ENCODE measurements at regions of chr15 and their contacts with region 1.

Region 1: DNA sequence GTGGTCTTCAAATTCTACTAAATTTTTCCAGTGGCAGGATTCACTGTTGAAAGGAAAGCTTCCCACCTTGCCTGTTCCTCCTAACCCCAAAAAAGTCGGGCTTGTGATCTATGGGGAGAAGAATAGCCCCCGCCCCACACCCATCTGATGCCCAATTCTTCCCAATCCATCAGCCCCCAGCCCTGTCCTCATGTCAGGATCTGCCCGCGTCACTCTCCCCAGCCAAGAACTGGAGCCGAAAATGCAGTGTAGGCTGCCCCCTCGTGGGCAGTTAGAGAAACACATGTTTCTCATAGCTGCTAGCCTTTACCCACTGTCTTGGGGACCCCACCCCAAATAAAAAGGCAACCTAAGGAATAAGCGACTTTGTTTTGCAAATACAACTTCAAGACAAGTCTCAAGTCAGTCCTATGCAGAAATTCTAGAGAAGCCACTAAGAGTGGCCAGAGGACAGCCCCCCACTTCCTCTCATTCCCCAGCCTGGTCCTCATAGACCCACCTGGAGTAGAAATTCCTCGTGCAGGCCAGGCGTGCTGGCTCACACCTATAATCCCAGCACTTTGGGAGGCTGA is 13.0 kb upstream of the CSK start:
- DNase-seq: peak; percentile 75
- ATAC-seq: peak; percentile 60
- H3K4me3 ChIP-seq: no peak overlapping the region
- H3K4me3 Mint-ChIP-seq: no peak overlapping the region
- H3K27ac ChIP-seq: no peak overlapping the region
- H3K27ac Mint-ChIP-seq: peak overlapping the region; percentile 18
- H3K4me1 ChIP-seq: peaks cover 34 to 41% of the 10 kb centered on the region in 2 donors
- H3K4me1 Mint-ChIP-seq: peaks cover 36% of the 10 kb centered on the region
- H3K27me3 ChIP-seq: no peaks in the 10 kb centered on the region
- H3K27me3 Mint-ChIP-seq: no peaks in the 10 kb centered on the region
- CTCF ChIP-seq: peak; percentile 84

Region 2: DNA sequence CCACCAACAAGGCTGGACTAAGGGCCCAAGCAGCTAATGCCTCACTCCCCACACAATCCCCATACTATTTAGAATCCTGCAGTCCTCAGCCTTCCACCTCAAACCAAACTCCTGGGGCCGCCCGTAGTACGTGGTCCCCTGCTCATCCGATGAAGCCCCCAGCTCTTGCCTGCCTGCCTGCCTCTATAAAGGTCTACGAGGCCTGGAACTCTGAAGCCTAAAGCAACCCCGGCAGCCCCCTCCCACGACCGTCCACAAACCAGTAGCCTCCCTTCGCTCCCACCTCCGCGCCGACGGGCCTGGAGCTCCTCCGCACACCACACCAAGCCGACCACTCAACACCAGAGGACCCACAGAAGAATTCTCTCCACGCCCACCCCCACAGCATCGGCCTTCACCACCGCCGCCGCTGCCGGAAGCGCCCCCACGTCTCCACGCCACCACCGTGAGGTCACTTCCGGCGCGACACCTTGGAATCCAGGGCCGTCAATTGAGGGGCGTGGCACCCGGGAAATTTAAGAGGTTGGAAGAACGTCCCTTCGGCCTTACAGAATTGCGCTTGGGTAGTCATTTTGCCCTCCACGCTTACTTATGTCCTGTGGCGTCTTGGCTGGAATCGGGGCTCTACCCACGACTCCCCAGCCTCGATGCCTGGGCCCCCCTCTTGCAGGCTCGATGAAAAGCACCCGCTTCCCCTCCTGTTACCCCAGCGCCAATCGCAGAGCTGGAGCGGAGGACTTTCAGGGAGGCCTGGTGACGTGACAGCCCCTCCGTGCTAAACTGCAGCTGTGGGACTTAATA is 73.1 kb before region 1 on chr15 and contains the start of gene EDC3:
- CTCF ChIA-PET with region 1: interaction called, 3 read pairs
- POLR2A ChIA-PET with region 1: no interaction called
- intact Hi-C with region 1: loop called (anchors 1 kb)
- DNase-seq: peak; percentile 90
- ATAC-seq: peak; percentile 89
- H3K4me3 ChIP-seq: peak within 1 kb of the TSS; percentile 70 to 95 (median 87)
- H3K4me3 Mint-ChIP-seq: peak within 1 kb of the TSS; percentile 100
- H3K27ac ChIP-seq: peak within 1 kb of the TSS; percentile 63 to 87
- H3K27ac Mint-ChIP-seq: peak within 1 kb of the TSS; percentile 97
- H3K4me1 ChIP-seq: peaks cover 14 to 16% of the 10 kb centered on the region in 2 donors
- H3K4me1 Mint-ChIP-seq: peaks cover 33% of the 10 kb centered on the region
- H3K27me3 ChIP-seq: peaks cover 0 to 3% (median 0%) of the 10 kb centered on the region in 4 experiments
- H3K27me3 Mint-ChIP-seq: no peaks in the 10 kb centered on the region
- CTCF ChIP-seq: no peak
- total RNA-seq, gene EDC3: 47.8 and 55.4 TPM in 2 replicates

Region 3: GRCh38 chr15:74799856-74800547 is 31.1 kb after region 1 on chr15:
- CTCF ChIA-PET with region 1: interaction called, 2,548 read pairs
- POLR2A ChIA-PET with region 1: interaction called, 572 read pairs
- intact Hi-C with region 1: loop called (anchors 1 kb)
- DNase-seq: peak; percentile 94
- ATAC-seq: peak; percentile 90
- H3K4me3 ChIP-seq: no peak overlapping the region
- H3K4me3 Mint-ChIP-seq: peak overlapping the region; percentile 78
- H3K27ac ChIP-seq: peak overlapping the region; percentile 89 to 93
- H3K27ac Mint-ChIP-seq: peak overlapping the region; percentile 90
- H3K4me1 ChIP-seq: peaks cover 56 to 61% of the 10 kb centered on the region in 2 donors
- H3K4me1 Mint-ChIP-seq: peaks cover 52% of the 10 kb centered on the region
- H3K27me3 ChIP-seq: no peaks in the 10 kb centered on the region
- H3K27me3 Mint-ChIP-seq: no peaks in the 10 kb centered on the region
- CTCF ChIP-seq: peak; percentile 93

Region 4: GRCh38 chr15:74842581-74843444 is 74.0 kb after region 1 on chr15 and contains the start of gene ULK3:
- CTCF ChIA-PET with region 1: interaction called, 98 read pairs
- POLR2A ChIA-PET with region 1: interaction called, 3 read pairs
- intact Hi-C with region 1: loop called (anchors 1 kb)
- DNase-seq: peak; percentile 95
- ATAC-seq: peak; percentile 95
- H3K4me3 ChIP-seq: peak within 1 kb of the TSS; percentile 65 to 88 (median 72)
- H3K4me3 Mint-ChIP-seq: peak within 1 kb of the TSS; percentile 91
- H3K27ac ChIP-seq: peak within 1 kb of the TSS; percentile 78 to 81
- H3K27ac Mint-ChIP-seq: peak within 1 kb of the TSS; percentile 92
- H3K4me1 ChIP-seq: peaks cover 26 to 40% of the 10 kb centered on the region in 2 donors
- H3K4me1 Mint-ChIP-seq: peaks cover 43% of the 10 kb centered on the region
- H3K27me3 ChIP-seq: no peaks in the 10 kb centered on the region
- H3K27me3 Mint-ChIP-seq: no peaks in the 10 kb centered on the region
- CTCF ChIP-seq: peak; percentile 80
- total RNA-seq, gene ULK3: 51.1 and 55.9 TPM in 2 replicates

Region 5: GRCh38 chr15:74950078-74951000 is 181.5 kb after region 1 on chr15:
- CTCF ChIA-PET with region 1: interaction called, 87 read pairs
- POLR2A ChIA-PET with region 1: no interaction called
- intact Hi-C with region 1: loop called (anchors 1 kb)
- DNase-seq: peak; percentile 86
- ATAC-seq: peak; percentile 95
- H3K4me3 ChIP-seq: no peak overlapping the region
- H3K4me3 Mint-ChIP-seq: no peak overlapping the region
- H3K27ac ChIP-seq: no peak overlapping the region
- H3K27ac Mint-ChIP-seq: no peak overlapping the region
- H3K4me1 ChIP-seq: peaks cover 6 to 8% of the 10 kb centered on the region in 2 donors
- H3K4me1 Mint-ChIP-seq: peaks cover 7% of the 10 kb centered on the region
- H3K27me3 ChIP-seq: peaks cover 0 to 22% (median 2%) of the 10 kb centered on the region in 4 experiments
- H3K27me3 Mint-ChIP-seq: peaks cover 7% of the 10 kb centered on the region
- CTCF ChIP-seq: peak; percentile 97

Measured in B cell (primary cell).